Right ventricle myocardium superior (tissue), 1 donor: ENCODE measurements at regions of chr4 and their contacts with region 1.

Region 1: DNA sequence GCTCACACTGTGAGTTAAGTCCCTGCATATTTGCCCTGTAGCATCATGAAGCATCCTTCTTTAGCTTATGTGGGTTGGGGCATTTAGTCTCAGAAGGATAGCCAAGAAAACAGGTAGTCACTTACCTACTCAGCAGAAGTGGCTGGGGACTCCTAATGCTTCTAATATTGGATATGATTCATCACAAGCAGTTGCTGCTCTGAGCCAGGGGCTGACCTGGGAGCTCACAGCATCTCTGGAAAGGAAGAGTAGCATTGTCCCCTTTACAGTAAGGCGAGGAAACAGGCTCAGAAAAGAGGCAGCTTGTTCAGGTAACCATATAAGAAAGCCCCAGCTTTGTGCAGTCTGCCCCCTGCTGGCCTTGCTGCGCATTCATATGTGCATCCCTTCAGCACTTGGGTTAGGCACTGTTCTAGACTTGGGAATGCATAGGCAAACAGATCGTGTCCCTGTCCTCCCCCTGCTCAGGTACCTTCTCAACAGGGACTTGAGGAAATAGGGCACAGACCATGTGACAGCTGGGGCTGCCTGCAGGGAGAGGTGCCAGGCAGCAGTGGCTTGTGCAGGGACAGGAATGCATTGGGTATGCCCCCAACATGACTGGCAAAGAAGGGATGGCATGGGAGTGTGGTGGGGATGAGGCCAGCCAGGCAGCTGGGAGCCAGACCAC is 35.7 kb upstream of the TBC1D14 start:
- DNase-seq: peak; percentile 88
- ATAC-seq: peak; percentile 65

Region 2: GRCh38 chr4:6720202-6720699 is 153.7 kb before region 1 on chr4:
- intact Hi-C with region 1: loop called (anchors 2 kb)
- DNase-seq: peak; percentile 89
- ATAC-seq: peak; percentile 79

Region 3: GRCh38 chr4:7192252-7193029 is 318.5 kb after region 1 on chr4 and contains the start of gene SORCS2:
- intact Hi-C with region 1: no loop called
- DNase-seq: peak; percentile 78
- ATAC-seq: peak; percentile 94
- total RNA-seq, gene SORCS2: 1.2 TPM